Dendritic cell treated with granulocyte-macrophage colony-stimulating factor and Interleukin-4, amounts not matched to agents 40 ng/mL and 50 ng/mL, for 4 days (primary cell): ENCODE measurements at regions of chr16 and their contacts with region 1.

Region 1: GRCh38 chr16:68448360-68448970 is at the start of gene SMPD3:
- H3K4me3 Mint-ChIP-seq: peak within 1 kb of the TSS; percentile 74
- H3K27ac Mint-ChIP-seq: peak within 1 kb of the TSS; percentile 42
- H3K4me1 Mint-ChIP-seq: peaks cover 32% of the 10 kb centered on the region
- H3K27me3 Mint-ChIP-seq: peaks cover 46% of the 10 kb centered on the region

Region 2: DNA sequence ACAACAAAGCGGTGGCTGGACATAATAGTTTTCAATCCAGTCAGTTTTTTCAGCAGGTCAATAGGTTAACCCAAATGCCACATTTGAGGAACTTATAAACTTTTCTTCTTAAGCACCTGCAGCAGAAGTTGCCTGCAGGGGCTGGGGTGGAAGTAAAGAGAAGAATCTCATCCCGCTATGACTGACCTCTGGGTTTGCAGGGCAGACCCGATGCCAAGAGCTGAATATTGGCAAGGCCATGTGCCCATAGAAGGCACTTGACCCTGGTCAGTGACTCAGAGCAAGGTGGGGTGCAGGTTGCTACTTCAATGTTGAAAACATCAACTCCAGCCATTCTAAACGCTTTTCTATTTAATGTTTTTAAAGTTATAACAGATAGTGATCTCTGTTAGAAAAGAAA is 17.7 kb after region 1 on chr16:
- intact Hi-C with region 1: loop called (anchors 2 kb)
- H3K4me3 Mint-ChIP-seq: no peak overlapping the region
- H3K27ac Mint-ChIP-seq: no peak overlapping the region
- H3K4me1 Mint-ChIP-seq: peaks cover 43% of the 10 kb centered on the region
- H3K27me3 Mint-ChIP-seq: no peaks in the 10 kb centered on the region

Region 3: DNA sequence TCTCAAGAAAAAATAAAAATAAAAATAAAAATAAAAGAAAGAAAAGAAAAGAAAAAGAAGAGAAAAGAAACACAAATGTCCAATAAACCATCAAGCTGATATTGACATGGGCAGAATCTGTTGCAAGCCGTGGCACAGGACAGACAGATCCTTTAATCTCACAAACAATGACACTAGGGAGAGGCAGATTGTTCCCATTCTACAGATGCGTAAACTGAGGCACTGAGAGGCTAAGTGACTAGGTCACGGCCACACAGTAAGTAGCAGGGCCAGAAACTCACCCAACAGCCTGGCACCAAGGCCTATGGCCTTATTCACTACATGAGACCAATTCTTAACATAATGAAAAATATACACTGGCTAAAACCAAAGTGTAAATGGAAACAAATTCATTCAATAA is 62.3 kb after region 1 on chr16:
- intact Hi-C with region 1: loop called (anchors 1 kb)
- H3K4me3 Mint-ChIP-seq: no peak overlapping the region
- H3K27ac Mint-ChIP-seq: no peak overlapping the region
- H3K4me1 Mint-ChIP-seq: peaks cover 35% of the 10 kb centered on the region
- H3K27me3 Mint-ChIP-seq: peaks cover 33% of the 10 kb centered on the region

Region 4: GRCh38 chr16:68685685-68686478 is 237.4 kb after region 1 on chr16:
- intact Hi-C with region 1: no loop called
- H3K4me3 Mint-ChIP-seq: no peak overlapping the region
- H3K27ac Mint-ChIP-seq: no peak overlapping the region
- H3K4me1 Mint-ChIP-seq: no peaks in the 10 kb centered on the region
- H3K27me3 Mint-ChIP-seq: peaks cover 1% of the 10 kb centered on the region